ENCODE measurements at regions of chr7 and their contacts with region 1.

Region 1: DNA sequence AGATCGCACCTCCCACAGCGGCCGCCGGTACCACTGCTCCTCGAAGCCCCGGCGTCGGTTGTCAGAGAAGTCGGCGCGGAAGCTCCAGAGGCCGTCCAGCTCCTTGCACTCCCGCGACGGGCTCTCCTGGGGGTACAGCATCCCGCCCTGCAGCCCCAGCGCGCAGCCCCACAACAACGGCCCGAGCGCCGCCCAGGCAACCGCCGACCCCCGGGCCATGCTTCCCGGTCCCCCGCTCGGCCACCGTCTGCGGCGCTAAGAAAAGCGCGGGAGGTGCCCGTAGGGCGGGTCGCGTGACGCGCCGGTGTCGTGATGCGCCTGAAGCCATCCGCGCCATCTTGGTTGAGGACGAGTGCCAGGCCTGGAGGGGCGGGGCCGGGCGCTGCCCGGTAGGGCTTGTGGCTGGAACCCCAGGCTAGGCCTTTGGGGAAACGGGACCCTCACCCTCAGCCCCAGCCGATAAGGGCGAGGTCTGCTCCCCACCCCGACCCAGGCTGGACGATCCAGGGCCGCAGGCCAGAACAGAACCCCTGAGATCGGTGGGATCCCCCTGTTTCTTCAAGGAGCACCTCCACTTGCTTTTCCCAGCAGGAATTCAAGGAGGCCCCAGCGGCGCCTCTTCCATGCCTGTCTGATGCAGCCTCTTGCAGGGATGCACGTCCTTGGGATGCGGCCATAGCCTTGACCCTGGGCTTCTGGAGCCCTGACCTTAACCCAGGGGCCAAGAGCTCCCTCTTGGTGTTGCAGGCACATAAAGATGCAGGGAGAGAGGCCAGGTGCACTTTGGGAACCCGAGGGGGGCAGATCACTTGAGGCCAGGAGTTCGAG is at the start of gene GUSB:
- DNase-seq: peak; percentile 91 to 92
- H3K4me3 ChIP-seq: peak within 1 kb of the TSS; percentile 29 to 93 (median 80)
- H3K27ac ChIP-seq: peak within 1 kb of the TSS; percentile 70 to 94 (median 72)
- H3K4me1 ChIP-seq: peaks cover 12 to 20% of the 10 kb centered on the region in 2 donors
- H3K27me3 ChIP-seq: no peaks in the 10 kb centered on the region
- CTCF ChIP-seq: no peak
- POLR2A ChIP-seq: peak in 1 of 2 donors; percentile 81
- total RNA-seq, gene GUSB: 30.1 to 51.5 (median 37.6) TPM

Region 2: DNA sequence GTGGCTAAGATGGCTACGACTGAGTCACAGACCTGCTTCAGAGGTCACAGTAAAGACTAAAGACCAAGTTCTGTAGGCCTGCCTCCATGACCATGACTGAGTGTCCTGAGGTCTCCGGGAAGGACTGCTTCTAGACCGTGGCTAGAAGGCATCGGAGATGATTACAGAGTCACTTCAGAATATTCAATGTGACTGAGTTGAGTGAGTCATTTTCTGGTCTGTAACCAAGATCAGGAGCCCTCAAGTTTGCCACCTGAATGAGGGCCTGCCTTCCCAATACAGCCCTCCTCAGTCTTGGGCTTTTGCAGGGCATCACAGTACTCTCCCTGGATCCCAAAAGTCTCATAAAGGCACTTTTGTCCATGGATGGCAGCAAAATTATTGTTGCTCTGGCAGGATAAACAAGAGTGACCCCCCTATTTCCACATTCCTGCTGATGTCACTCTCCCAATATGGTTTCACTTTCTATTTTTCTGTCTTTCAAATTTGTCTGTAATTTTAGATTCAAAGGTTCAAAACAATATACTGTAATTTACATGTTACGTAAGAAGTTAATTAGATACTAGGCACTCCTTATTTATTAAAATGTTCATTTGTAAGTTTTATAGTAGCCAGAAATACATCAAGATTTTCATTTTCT is 656.3 kb before region 1 on chr7:
- intact Hi-C with region 1: no loop called
- DNase-seq: no peak
- H3K4me3 ChIP-seq: no peak overlapping the region
- H3K27ac ChIP-seq: no peak overlapping the region
- H3K4me1 ChIP-seq: peaks cover 4 to 9% of the 10 kb centered on the region in 2 donors
- H3K27me3 ChIP-seq: no peaks in the 10 kb centered on the region
- CTCF ChIP-seq: no peak
- POLR2A ChIP-seq: no peak

Region 3: DNA sequence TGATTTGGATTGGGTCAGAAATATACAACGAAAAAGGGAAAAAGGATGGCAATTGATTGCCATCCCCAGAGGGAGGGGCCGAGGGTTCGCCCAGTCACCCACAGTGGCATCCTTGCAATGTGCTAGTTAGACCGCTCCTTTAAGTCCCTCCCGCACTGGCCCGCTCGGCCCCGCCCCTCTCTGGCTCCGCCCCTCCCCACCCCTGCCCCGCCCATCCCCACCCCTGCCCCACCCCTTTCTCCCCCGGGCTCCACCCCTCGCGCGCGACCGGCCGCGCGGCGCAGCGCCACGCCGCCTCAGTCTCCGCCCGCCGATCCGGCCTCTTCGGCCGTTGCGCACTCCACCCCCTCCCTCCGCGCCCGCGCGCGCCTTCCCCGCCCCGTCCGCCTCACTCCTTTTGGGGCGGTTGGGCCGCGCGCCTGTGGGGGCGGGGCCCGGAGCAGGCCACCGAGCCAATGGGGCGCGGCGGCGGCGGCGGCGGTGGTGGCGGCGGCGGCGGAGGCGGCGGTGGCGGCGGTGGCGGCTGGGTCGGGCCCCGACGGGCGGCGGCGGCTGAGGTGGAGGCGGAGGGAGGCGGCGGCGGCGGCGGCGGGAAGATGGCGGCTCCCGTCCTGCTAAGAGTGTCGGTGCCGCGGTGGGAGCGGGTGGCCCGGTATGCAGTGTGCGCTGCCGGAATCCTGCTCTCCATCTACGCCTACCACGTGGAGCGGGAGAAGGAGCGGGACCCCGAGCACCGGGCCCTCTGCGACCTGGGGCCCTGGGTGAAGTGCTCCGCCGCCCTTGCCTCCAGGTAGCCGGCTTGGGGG is 109.2 kb before region 1 on chr7 and contains the start of gene VKORC1L1:
- intact Hi-C with region 1: loop called (anchors 5 kb)
- DNase-seq: peak; percentile 94 to 95
- H3K4me3 ChIP-seq: peak within 1 kb of the TSS; percentile 39 to 77 (median 71)
- H3K27ac ChIP-seq: peak within 1 kb of the TSS in 1 of 3 donors; percentile 61
- H3K4me1 ChIP-seq: peaks cover 4 to 8% of the 10 kb centered on the region in 2 donors
- H3K27me3 ChIP-seq: no peaks in the 10 kb centered on the region
- CTCF ChIP-seq: no peak
- POLR2A ChIP-seq: peak in 1 of 2 donors; percentile 54
- total RNA-seq, gene VKORC1L1: 13.9 to 21.0 (median 18.2) TPM

Measured in thyroid gland (tissue), 4 donors.